ENCODE measurements at regions of chr14 and their contacts with region 1.

Region 1: DNA sequence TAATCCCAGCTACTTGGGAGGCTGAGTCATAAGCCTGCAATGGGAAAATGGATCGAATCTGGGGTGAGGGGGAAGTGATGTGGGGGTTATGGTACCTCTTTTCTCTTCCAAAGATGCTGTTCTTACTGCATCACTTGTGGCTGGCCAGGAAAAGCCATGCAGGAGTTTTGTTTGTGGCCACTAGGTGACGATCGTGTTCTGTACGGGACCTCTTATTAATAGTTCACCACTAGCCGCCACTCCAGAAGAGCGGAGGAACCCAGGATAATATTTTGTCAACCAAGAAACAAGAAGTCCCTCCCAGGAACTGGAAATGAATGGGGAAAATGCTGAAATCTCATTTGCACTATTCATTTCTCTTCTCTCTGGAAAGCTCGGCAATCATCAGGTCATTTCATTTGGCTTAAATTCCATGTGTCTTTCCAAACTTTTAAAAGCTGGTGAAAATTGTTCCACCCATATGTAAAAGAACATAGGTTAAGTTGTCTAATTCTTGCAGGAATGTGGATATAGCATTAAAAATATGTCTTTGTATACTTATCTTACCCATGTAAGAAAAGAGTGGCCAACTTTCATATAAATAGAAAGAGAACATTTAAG is 8.9 kb downstream of the GPR65 start:
- DNase-seq: peak; percentile 84
- ATAC-seq: peak; percentile 91
- H3K4me3 ChIP-seq: no peak overlapping the region
- H3K27ac ChIP-seq: no peak overlapping the region
- H3K4me1 ChIP-seq: no peaks in the 10 kb centered on the region; the same call in 1 of the 2 replicates
- H3K27me3 ChIP-seq: no peaks in the 10 kb centered on the region
- CTCF ChIP-seq: peak; percentile 92

Region 2: GRCh38 chr14:87990682-87991081 is 23.2 kb before region 1 on chr14:
- CTCF ChIA-PET with region 1: no interaction called
- POLR2A ChIA-PET with region 1: no interaction called
- intact Hi-C with region 1: loop called (anchors 2 kb)
- DNase-seq: no peak
- ATAC-seq: no peak
- H3K4me3 ChIP-seq: no peak overlapping the region
- H3K27ac ChIP-seq: no peak overlapping the region
- H3K4me1 ChIP-seq: no peaks in the 10 kb centered on the region
- H3K27me3 ChIP-seq: no peaks in the 10 kb centered on the region
- CTCF ChIP-seq: no peak

Region 3: GRCh38 chr14:88189417-88190191 is 175.8 kb after region 1 on chr14:
- CTCF ChIA-PET with region 1: interaction called, 3 read pairs
- POLR2A ChIA-PET with region 1: no interaction called
- intact Hi-C with region 1: loop called (anchors 2 kb)
- DNase-seq: peak; percentile 96
- ATAC-seq: peak; percentile 98
- H3K4me3 ChIP-seq: peak overlapping the region; percentile 58
- H3K27ac ChIP-seq: no peak overlapping the region
- H3K4me1 ChIP-seq: 0 out of 2 replicates have a peak, but pooled peaks cover 5% of the 10 kb centered on the region
- H3K27me3 ChIP-seq: peaks cover 17% of the 10 kb centered on the region
- CTCF ChIP-seq: peak; percentile 86

Region 4: DNA sequence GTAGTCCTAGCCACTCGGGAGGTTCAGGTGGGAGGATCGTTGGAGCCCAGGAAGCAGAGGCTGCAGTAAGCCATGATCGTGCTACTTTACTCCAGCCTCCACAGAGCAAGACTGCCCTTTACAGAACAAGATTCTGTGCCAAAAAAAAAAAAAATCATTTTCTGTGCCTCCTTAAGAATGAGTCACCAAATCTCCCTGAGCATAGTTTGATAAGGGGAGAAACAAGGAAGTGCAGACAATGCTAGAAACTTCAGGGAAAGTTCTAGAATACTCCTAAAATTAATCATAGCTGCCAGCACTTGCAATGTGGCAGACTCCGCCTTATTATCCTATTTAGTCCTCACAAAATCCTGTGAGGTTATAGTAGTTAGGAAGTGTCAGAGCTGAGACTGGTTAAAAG is 234.8 kb after region 1 on chr14:
- CTCF ChIA-PET with region 1: no interaction called
- POLR2A ChIA-PET with region 1: no interaction called
- intact Hi-C with region 1: no loop called
- DNase-seq: peak; percentile 58
- ATAC-seq: no peak
- H3K4me3 ChIP-seq: no peak overlapping the region
- H3K27ac ChIP-seq: 0 out of 2 replicates have a peak overlapping the region, but pooled peaks have one; percentile 1
- H3K4me1 ChIP-seq: 0 out of 2 replicates have a peak, but pooled peaks cover 4% of the 10 kb centered on the region
- H3K27me3 ChIP-seq: no peaks in the 10 kb centered on the region
- CTCF ChIP-seq: no peak

Region 5: GRCh38 chr14:88272390-88273269 is 258.8 kb after region 1 on chr14:
- CTCF ChIA-PET with region 1: no interaction called
- POLR2A ChIA-PET with region 1: no interaction called
- intact Hi-C with region 1: no loop called
- DNase-seq: no peak
- ATAC-seq: no peak
- H3K4me3 ChIP-seq: no peak overlapping the region
- H3K27ac ChIP-seq: no peak overlapping the region
- H3K4me1 ChIP-seq: no peaks in the 10 kb centered on the region
- H3K27me3 ChIP-seq: 0 out of 2 replicates have a peak, but pooled peaks cover 9% of the 10 kb centered on the region
- CTCF ChIP-seq: no peak

Region 6: DNA sequence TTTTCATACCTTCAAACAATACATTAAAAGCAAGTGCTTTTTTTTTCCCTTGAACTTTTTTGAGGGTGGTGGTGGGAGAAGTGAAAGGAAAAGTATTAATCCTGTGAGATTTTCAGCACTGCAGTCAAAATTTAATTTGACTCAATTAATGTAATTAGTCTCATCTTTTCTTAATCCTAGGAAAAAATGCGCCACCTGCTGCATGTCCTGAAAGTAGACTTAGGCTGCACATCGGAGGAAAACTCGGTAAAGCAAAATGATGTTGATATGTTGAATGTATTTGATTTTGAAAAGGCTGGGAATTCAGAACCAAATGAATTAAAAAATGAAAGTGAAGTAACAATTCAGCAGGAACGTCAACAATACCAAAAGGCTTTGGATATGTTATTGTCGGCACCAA is 423.8 kb after region 1 on chr14:
- CTCF ChIA-PET with region 1: no interaction called
- POLR2A ChIA-PET with region 1: no interaction called
- intact Hi-C with region 1: loop called (anchors 1 kb)
- DNase-seq: peak; percentile 25
- ATAC-seq: no peak
- H3K4me3 ChIP-seq: no peak overlapping the region
- H3K27ac ChIP-seq: no peak overlapping the region
- H3K4me1 ChIP-seq: peaks cover 4% of the 10 kb centered on the region
- H3K27me3 ChIP-seq: no peaks in the 10 kb centered on the region
- CTCF ChIP-seq: peak; percentile 74